Heart right ventricle (tissue), 16 donors: ENCODE measurements at regions of chr2 and their contacts with region 1.

Region 1: DNA sequence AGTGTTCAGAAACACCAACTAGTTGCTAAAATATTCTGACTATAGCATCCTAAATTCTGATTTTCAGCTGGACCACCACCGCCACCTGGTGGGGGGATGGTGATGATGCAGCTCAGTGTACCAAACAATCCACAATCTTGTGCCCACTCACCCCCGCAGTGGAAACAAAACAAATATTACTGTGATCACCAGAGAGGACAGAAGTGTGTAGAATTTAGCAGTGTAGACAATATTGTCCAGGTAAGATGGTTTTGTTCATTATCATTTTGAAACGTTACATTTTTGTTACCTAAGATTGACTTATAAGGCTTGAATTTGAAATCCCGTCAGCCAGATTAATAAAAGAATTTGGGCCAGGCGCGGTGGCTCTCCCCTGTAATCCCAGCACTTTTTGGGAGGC is 31.7 kb upstream of the UBXN4 start:
- DNase-seq: peak; percentile 26 to 55
- ATAC-seq: peak in 5 of 8 donors; percentile 37 to 56 (median 54)
- H3K4me3 ChIP-seq: no peak overlapping the region
- H3K27ac ChIP-seq: no peak overlapping the region
- H3K4me1 ChIP-seq: no peaks in the 10 kb centered on the region
- H3K27me3 ChIP-seq: no peaks in the 10 kb centered on the region
- CTCF ChIP-seq: peak; percentile 86 to 99 (median 95)

Region 2: DNA sequence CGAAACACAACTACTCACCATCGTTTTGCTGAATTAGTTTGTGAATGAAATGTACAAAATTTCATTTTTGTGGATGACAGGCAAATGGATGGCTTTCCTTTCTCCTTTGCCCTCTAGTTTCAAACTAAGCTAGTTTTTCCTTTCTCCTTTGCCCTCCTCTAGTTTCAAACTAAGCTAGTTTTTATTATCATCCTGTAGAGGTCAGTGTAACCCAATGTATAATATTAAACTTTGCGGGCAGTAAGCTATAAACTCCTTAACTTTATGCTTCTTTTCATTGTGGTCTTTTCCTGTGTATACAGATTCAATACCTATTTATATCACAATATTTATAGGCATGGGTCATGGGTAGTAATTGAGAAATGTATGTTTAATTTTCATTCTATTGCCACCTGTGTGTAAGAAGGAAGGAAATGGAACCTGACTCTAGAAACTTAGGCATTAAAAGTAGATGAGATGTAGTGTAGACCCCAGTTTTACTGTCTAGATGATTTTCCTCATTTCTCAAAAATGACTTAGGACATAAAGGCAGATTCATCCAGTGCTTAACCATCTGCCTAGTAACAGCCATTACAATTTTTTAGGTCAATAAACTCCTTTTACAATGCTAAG is 720.9 kb before region 1 on chr2:
- intact Hi-C with region 1: loop called in 2 of 10 experiments (anchors 5 kb)
- DNase-seq: no peak
- ATAC-seq: peak in 1 of 8 donors; percentile 53
- H3K4me3 ChIP-seq: no peak overlapping the region
- H3K27ac ChIP-seq: no peak overlapping the region
- H3K4me1 ChIP-seq: no peaks in the 10 kb centered on the region
- H3K27me3 ChIP-seq: no peaks in the 10 kb centered on the region
- CTCF ChIP-seq: peak in 8 of 9 donors; percentile 9 to 65 (median 50)

Region 3: DNA sequence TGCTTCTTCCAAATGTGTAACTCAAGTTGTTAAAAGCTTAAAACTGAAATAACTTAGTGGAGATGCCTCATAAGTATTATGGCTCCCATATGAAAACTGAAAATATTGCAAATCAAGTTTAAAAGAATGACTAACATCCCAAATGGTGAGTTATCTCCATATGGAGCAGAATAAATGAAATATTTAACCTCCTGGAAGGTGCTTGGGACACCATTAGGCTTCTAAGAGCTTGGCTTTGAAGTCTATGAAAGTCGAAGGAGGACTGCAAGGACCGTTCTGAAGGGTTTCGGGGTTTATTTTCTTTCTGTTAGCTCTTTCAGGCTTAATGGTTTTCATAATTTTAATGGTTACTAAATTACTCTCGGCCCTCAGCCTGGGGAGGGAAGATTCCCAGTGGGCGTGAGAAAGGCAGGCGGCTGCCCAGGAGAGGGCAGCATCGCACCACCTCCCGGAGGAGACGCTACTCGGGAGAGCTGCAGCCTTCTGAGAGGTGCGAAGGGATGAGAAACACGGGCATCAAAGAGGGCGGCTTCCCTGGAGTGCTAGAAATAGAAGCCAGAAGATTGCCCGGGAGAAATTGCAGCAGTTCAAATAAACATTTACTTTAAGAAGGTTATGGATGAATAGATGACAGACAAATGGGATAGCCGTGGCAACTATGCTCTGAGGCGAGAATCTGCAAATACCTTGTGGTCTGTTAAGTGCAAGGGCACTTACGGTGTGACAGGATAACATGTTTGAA is 705.8 kb before region 1 on chr2:
- intact Hi-C with region 1: loop called in 9 of 10 experiments (anchors 1 to 5 kb)
- DNase-seq: peak; percentile 65 to 74
- ATAC-seq: peak; percentile 91 to 100 (median 95)
- H3K4me3 ChIP-seq: no peak overlapping the region
- H3K27ac ChIP-seq: no peak overlapping the region
- H3K4me1 ChIP-seq: peaks cover 0 to 7% (median 0%) of the 10 kb centered on the region in 9 donors
- H3K27me3 ChIP-seq: peaks cover 0 to 33% (median 23%) of the 10 kb centered on the region in 7 donors
- CTCF ChIP-seq: peak; percentile 82 to 96 (median 91)

Region 4: GRCh38 chr2:135473567-135473966 is 236.4 kb before region 1 on chr2:
- intact Hi-C with region 1: loop called in 7 of 10 experiments (anchors 2 to 10 kb)
- DNase-seq: no peak
- ATAC-seq: no peak
- H3K4me3 ChIP-seq: no peak overlapping the region
- H3K27ac ChIP-seq: no peak overlapping the region
- H3K4me1 ChIP-seq: no peaks in the 10 kb centered on the region
- H3K27me3 ChIP-seq: no peaks in the 10 kb centered on the region
- CTCF ChIP-seq: peak in 8 of 9 donors; percentile 28 to 60 (median 56)